Gastrocnemius medialis (tissue), 4 donors: ENCODE measurements at regions of chr5 and their contacts with region 1.

Region 1: GRCh38 chr5:53469946-53470687 is 10.3 kb upstream of the FST start:
- DNase-seq: no peak
- ATAC-seq: no peak
- H3K4me3 ChIP-seq: no peak overlapping the region
- H3K27ac ChIP-seq: no peak overlapping the region
- H3K4me1 ChIP-seq: no peaks in the 10 kb centered on the region
- H3K27me3 ChIP-seq: no peaks in the 10 kb centered on the region
- CTCF ChIP-seq: no peak
- POLR2A ChIP-seq: no peak

Region 2: DNA sequence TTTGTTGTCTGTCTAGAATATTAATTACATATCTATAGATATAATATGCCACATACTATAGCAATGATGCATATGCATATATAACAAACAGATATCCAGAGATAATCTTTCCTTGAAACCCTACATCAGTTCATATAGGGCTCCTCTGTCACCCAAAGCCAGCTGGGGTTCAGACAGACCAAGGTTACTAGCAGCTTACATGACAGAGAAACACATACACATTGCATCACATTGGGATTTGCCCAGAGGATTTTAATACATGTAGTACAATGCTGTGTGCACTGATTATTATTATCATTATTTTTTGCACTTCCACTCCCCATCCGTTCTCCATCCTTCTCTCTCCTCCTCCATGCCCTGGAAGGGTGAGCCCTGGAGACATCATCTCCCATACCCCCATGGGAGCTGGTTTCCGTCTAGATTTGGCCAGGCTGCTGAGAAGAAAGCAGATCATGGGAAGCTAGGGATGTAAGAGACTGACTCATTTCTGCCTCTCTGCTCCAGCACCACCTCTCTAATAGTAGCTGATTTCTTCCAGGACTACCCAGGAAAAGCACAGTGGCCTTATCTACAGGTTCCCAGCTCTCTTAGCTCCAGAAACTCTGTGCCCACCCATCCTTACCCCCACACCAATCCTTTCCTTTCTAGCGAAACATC is 33.6 kb after region 1 on chr5:
- in situ Hi-C with region 1: no loop called
- intact Hi-C with region 1: no loop called
- DNase-seq: no peak
- ATAC-seq: no peak
- H3K4me3 ChIP-seq: no peak overlapping the region
- H3K27ac ChIP-seq: no peak overlapping the region
- H3K4me1 ChIP-seq: no peaks in the 10 kb centered on the region
- H3K27me3 ChIP-seq: no peaks in the 10 kb centered on the region
- CTCF ChIP-seq: no peak
- POLR2A ChIP-seq: no peak

Region 3: DNA sequence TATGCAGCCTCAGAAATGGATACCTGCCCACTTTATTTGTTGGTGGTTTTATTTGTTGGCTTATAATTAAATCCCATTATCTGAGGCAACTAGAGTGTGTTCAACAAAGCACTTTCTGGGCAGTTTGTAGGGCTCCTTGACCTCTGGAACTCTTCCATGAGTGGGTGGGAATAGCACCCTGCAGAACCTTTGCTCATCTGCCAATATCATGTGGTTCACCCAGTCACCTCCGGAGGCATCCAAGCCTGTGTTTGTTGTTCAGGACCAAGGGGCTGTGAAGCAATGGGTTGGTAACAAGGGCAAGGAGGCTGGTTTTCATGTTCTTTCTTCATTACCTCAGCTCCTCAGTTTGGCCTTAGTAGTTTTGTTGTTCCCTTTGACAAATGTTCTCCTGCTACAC is 404.3 kb after region 1 on chr5:
- in situ Hi-C with region 1: loop called in 1 of 4 experiments (anchors 25 kb)
- intact Hi-C with region 1: no loop called
- DNase-seq: no peak
- ATAC-seq: no peak
- H3K4me3 ChIP-seq: no peak overlapping the region
- H3K27ac ChIP-seq: no peak overlapping the region
- H3K4me1 ChIP-seq: no peaks in the 10 kb centered on the region
- H3K27me3 ChIP-seq: no peaks in the 10 kb centered on the region
- CTCF ChIP-seq: no peak
- POLR2A ChIP-seq: no peak

Region 4: DNA sequence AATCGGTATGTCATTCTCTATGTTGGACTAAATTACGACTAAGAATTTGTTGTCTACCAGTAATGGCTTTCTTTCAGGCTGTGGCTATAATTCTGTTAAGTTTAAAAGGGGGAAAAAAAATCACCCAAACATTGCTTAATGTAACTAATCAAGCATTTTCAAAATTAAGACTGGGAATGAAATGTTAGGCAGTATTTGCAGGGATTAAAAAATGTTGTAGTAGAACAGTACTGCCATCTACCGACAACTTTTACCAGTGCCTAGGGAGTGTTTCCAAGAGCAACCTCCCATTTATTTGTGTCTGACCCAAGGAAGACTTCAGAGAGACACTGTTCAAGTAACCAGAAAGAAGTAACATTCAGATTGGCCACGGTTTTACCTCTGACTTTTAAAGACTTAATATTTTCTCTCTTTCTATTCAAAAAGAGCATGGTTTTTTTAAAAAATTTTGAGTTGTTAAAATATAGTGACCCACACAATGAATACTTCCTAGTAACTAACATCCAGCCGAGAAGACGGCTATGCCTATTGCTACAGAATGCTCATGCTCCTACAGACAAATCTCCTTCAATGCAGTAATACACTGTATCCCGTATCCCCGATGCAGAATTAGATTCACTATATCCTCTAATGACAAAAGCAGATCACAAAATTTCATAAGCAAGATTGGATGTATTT is 747.8 kb after region 1 on chr5:
- in situ Hi-C with region 1: loop called in 3 of 4 experiments (anchors 10 to 25 kb)
- intact Hi-C with region 1: no loop called
- DNase-seq: no peak
- ATAC-seq: peak; percentile 66 to 73
- H3K4me3 ChIP-seq: no peak overlapping the region
- H3K27ac ChIP-seq: no peak overlapping the region
- H3K4me1 ChIP-seq: no peaks in the 10 kb centered on the region
- H3K27me3 ChIP-seq: no peaks in the 10 kb centered on the region
- CTCF ChIP-seq: peak; percentile 33 to 81 (median 60)
- POLR2A ChIP-seq: no peak